ENCODE measurements at regions of chr2 and their contacts with region 1.

Region 1: GRCh38 chr2:57376985-57377384 is 669.6 kb upstream of the VRK2 start:
- DNase-seq: peak; percentile 26
- ATAC-seq: 0 out of 2 replicates have a peak, but pooled peaks have one; percentile 43
- H3K4me3 ChIP-seq: no peak overlapping the region
- H3K27ac ChIP-seq: no peak overlapping the region
- H3K4me1 ChIP-seq: peaks cover 11% of the 10 kb centered on the region
- H3K27me3 ChIP-seq: 0 out of 2 replicates have a peak, but pooled peaks cover 5% of the 10 kb centered on the region
- CTCF ChIP-seq: peak; percentile 59

Region 2: DNA sequence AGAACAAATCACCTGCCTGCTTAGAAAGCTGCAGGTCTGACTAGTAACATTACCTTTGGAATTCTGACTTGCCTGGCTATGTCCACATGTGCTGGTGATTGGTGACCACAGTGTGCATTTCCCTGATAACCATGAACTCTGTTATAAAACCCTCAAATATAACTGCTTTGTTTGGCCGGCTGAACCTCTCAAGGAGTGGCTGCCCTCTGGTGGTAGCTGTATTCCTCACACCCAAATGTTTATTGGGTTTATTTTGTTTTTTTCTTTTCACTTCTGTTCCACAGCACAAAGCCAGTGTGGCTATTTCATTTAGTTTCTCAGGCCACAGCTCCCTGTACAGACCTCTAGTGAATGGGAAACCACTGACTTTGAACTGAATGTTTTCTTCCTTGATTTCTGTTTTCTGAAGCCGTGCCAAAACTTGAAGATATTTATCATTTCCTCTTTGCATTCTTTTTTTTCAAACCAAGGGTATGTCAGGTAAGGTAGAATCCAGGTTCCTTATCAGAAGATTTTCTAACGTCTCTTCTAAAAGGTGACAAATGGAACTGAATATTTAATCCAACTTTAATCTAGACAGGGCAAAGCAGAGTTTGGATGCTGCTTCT is 120.6 kb after region 1 on chr2:
- CTCF ChIA-PET with region 1: no interaction called
- POLR2A ChIA-PET with region 1: no interaction called
- intact Hi-C with region 1: loop called (anchors 5 kb)
- DNase-seq: peak; percentile 73
- ATAC-seq: peak; percentile 76
- H3K4me3 ChIP-seq: no peak overlapping the region
- H3K27ac ChIP-seq: no peak overlapping the region
- H3K4me1 ChIP-seq: no peaks in the 10 kb centered on the region
- H3K27me3 ChIP-seq: peaks cover 62% of the 10 kb centered on the region
- CTCF ChIP-seq: peak; percentile 88

Measured in PC-3 (cell line).